A673 (cell line): ENCODE measurements at regions of chr14 and their contacts with region 1.

Region 1: GRCh38 chr14:77862154-77862786 is 62.4 kb downstream of the ADCK1 start:
- DNase-seq: peak; percentile 67
- H3K4me3 ChIP-seq: no peak overlapping the region
- H3K27ac ChIP-seq: no peak overlapping the region
- H3K4me1 ChIP-seq: no peaks in the 10 kb centered on the region
- H3K27me3 ChIP-seq: no peaks in the 10 kb centered on the region
- CTCF ChIP-seq: peak; percentile 99

Region 2: GRCh38 chr14:77175607-77176242 is 686.5 kb before region 1 on chr14:
- CTCF ChIA-PET with region 1: no interaction called
- POLR2A ChIA-PET with region 1: no interaction called
- intact Hi-C with region 1: no loop called
- DNase-seq: no peak
- H3K4me3 ChIP-seq: no peak overlapping the region
- H3K27ac ChIP-seq: no peak overlapping the region
- H3K4me1 ChIP-seq: no peaks in the 10 kb centered on the region
- H3K27me3 ChIP-seq: no peaks in the 10 kb centered on the region
- CTCF ChIP-seq: no peak

Region 3: GRCh38 chr14:78153064-78153341 is 290.7 kb after region 1 on chr14:
- CTCF ChIA-PET with region 1: no interaction called
- POLR2A ChIA-PET with region 1: no interaction called
- intact Hi-C with region 1: loop called (anchors 2 kb)
- DNase-seq: peak; percentile 59
- H3K4me3 ChIP-seq: no peak overlapping the region
- H3K27ac ChIP-seq: no peak overlapping the region
- H3K4me1 ChIP-seq: peaks cover 9% of the 10 kb centered on the region
- H3K27me3 ChIP-seq: peaks cover 5% of the 10 kb centered on the region
- CTCF ChIP-seq: peak; percentile 34; the same call in 1 of the 2 replicates

Region 4: DNA sequence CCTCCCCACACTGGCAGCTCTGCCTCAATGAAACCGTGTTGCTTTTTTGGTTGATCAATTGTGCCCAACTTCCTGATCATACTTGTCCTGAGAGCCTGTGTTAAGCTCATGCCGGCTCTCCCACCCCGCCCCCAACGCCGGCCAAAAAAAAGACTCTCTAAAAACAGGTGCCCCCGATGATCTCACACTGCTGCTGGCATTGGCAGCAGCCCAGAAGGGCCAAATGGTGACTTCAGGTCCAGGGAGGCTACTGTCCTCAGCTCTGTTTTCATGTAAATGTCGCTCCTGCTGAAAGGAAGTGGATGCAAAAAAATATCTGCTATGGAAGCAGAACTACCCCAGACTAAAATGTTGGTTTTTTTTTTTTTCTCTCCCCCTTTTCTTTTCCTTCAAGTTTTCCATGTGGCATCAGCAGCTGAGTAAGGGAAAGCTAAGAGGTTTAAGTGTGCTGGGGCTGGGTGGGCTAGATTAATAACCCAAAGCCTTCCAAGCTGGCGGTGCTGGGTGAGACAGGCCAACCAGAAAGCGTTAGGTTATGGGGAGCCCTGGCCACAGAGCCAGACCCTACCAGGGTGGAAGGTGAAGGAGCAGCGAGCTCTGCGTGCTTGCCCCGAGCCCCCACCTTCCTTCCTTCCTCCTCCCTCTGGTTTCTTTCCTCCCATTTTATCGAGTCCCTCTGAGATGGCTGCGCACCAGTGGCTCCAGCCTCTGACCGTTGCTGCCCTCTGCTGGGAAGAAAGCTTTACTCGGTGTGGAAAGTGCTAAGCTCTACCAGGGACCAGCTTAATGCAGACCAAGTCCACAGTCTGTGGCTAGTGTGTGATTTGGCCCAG is 704.0 kb after region 1 on chr14:
- CTCF ChIA-PET with region 1: interaction called, 3 read pairs
- POLR2A ChIA-PET with region 1: no interaction called
- intact Hi-C with region 1: loop called (anchors 5 kb)
- DNase-seq: peak; percentile 79
- H3K4me3 ChIP-seq: no peak overlapping the region
- H3K27ac ChIP-seq: no peak overlapping the region
- H3K4me1 ChIP-seq: no peaks in the 10 kb centered on the region
- H3K27me3 ChIP-seq: peaks cover 2% of the 10 kb centered on the region
- CTCF ChIP-seq: peak; percentile 85